ENCODE measurements at regions of chr4 and their contacts with region 1.

Region 1: DNA sequence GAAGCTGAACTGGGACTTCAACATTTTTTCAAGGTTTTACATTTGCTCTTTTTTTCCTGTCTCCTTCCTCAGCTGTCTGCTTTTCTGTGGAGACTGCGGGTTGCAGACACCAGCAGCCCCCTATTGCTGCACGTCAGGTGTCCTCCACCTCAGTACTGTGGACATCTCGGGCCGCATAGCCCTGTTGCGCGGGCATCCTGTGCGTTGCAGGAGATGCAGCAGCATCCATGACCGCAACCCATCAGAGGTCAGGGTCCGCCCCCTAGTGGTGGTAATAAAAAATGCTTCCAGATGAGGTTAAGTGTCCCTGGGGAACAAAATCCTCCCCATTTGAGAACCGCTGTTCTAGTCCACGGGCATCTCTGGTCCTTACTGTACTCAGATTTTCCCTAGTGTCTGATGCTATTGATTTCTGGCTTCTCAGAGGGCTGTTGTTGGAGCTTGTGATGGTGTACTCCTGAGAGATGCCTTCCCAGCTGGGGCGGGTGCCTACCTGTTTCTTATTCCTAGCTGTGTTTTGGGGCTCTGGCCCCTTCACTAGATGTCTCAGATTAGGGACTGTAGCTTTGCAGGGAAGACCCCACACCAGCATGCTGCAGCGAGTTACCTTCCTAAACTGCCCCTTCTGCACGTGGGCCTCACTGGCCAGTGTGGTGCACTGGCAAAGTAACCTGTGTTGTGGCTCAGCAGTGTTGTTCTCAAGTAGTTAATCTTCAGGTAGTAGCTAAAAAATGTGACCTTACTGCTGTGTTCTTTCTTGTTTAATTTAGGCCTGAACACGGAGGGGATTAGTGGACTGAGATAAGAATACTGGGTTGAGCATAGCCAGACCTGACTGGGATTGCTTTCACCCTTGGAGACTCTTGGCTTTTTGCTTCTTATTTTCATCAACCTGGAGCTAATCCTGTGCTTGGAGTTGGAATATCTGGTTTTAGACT is 28.2 kb downstream of the NSD2 start:
- DNase-seq: peak; percentile 63 to 72
- ATAC-seq: peak; percentile 87 to 98 (median 93)
- H3K4me3 ChIP-seq: no peak overlapping the region
- H3K27ac ChIP-seq: no peak overlapping the region
- H3K4me1 ChIP-seq: no peaks in the 10 kb centered on the region
- H3K27me3 ChIP-seq: no peaks in the 10 kb centered on the region
- CTCF ChIP-seq: peak; percentile 88

Region 2: GRCh38 chr4:1746265-1746691 is 153.1 kb before region 1 on chr4:
- intact Hi-C with region 1: loop called (anchors 2 kb)
- DNase-seq: peak; percentile 75 to 85
- ATAC-seq: peak; percentile 81 to 91 (median 82)
- H3K4me3 ChIP-seq: no peak overlapping the region
- H3K27ac ChIP-seq: no peak overlapping the region
- H3K4me1 ChIP-seq: no peaks in the 10 kb centered on the region
- H3K27me3 ChIP-seq: peaks cover 0 to 8% (median 0%) of the 10 kb centered on the region in 3 donors
- CTCF ChIP-seq: peak; percentile 78

Region 3: GRCh38 chr4:1809754-1810511 is 89.5 kb before region 1 on chr4:
- intact Hi-C with region 1: loop called in 1 of 2 experiments (anchors 5 kb)
- DNase-seq: peak; percentile 59 to 76
- ATAC-seq: peak; percentile 62 to 79 (median 70)
- H3K4me3 ChIP-seq: no peak overlapping the region
- H3K27ac ChIP-seq: no peak overlapping the region
- H3K4me1 ChIP-seq: no peaks in the 10 kb centered on the region
- H3K27me3 ChIP-seq: no peaks in the 10 kb centered on the region
- CTCF ChIP-seq: peak; percentile 64

Region 4: GRCh38 chr4:1856042-1856788 is 43.2 kb before region 1 on chr4 and contains the start of gene LETM1:
- intact Hi-C with region 1: loop called in 1 of 2 experiments (anchors 5 kb)
- DNase-seq: peak; percentile 97 to 98
- ATAC-seq: peak; percentile 97 to 98 (median 98)
- H3K4me3 ChIP-seq: peak within 1 kb of the TSS; percentile 95
- H3K27ac ChIP-seq: peak within 1 kb of the TSS; percentile 79
- H3K4me1 ChIP-seq: peaks cover 33% of the 10 kb centered on the region
- H3K27me3 ChIP-seq: no peaks in the 10 kb centered on the region
- CTCF ChIP-seq: peak; percentile 7
- total RNA-seq, gene LETM1: 26.8 to 50.3 (median 40.1) TPM